CD4-positive, alpha-beta T cell (primary cell): ENCODE measurements at regions of chr2 and their contacts with region 1.

Region 1: GRCh38 chr2:203782262-203782976 is 76.0 kb downstream of the CD28 start:
- DNase-seq: peak; percentile 35 to 86 (median 52)
- ATAC-seq: peak; percentile 92
- H3K4me3 ChIP-seq: no peak overlapping the region
- H3K4me3 Mint-ChIP-seq: no peak overlapping the region
- H3K27ac ChIP-seq: no peak overlapping the region
- H3K27ac Mint-ChIP-seq: peak overlapping the region; percentile 62
- H3K4me1 ChIP-seq: peaks cover 20% of the 10 kb centered on the region
- H3K4me1 Mint-ChIP-seq: peaks cover 54% of the 10 kb centered on the region
- H3K27me3 ChIP-seq: no peaks in the 10 kb centered on the region
- H3K27me3 Mint-ChIP-seq: no peaks in the 10 kb centered on the region
- CTCF ChIP-seq: peak; percentile 79

Region 2: DNA sequence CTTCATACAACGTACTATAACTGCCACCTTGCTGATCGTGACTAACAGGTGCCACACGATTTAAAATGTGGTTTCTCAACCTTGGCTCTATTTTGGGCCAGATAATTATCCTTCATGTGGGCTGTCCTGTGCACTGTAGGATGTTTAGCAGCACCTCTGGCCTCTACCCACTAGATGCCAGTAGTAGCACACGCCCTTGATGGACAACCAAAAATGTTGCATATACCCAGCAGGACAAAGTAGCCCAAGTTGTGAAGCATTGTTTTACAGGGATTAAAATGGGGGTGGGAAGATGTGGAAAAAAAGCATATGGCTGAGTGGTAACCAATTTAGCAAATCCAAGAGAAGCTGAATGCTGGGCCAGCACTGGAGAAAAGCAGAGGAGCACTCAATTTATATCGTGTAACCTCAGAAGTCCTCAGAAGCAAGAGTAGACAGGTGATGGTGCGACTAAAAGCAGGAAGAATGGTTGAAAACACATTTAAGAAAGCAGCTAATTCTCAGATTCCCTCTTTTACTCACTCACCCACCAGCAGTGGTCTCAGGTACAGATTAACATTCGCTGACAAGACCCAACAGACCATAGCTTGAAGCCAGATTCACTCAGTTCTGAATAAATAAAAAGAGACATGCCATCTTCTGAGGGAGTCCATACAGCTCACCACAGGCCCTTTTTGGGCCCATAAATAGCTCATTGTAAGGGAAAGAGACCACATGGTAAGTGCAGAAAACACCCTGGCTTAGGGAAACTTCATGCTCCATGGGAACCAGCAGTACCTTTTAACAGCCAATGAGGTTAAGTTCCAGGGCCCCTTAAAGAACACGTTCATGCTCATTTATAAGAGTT is 297.9 kb before region 1 on chr2:
- CTCF ChIA-PET with region 1: interaction called, 5 read pairs
- POLR2A ChIA-PET with region 1: interaction called, 3 read pairs
- intact Hi-C with region 1: loop called (anchors 1 to 10 kb)
- DNase-seq: peak; percentile 34 to 83 (median 48)
- ATAC-seq: peak; percentile 98
- H3K4me3 ChIP-seq: no peak overlapping the region
- H3K4me3 Mint-ChIP-seq: no peak overlapping the region
- H3K27ac ChIP-seq: no peak overlapping the region
- H3K27ac Mint-ChIP-seq: no peak overlapping the region
- H3K4me1 ChIP-seq: peaks cover 3% of the 10 kb centered on the region
- H3K4me1 Mint-ChIP-seq: peaks cover 6% of the 10 kb centered on the region
- H3K27me3 ChIP-seq: no peaks in the 10 kb centered on the region
- H3K27me3 Mint-ChIP-seq: no peaks in the 10 kb centered on the region
- CTCF ChIP-seq: peak; percentile 77

Region 3: DNA sequence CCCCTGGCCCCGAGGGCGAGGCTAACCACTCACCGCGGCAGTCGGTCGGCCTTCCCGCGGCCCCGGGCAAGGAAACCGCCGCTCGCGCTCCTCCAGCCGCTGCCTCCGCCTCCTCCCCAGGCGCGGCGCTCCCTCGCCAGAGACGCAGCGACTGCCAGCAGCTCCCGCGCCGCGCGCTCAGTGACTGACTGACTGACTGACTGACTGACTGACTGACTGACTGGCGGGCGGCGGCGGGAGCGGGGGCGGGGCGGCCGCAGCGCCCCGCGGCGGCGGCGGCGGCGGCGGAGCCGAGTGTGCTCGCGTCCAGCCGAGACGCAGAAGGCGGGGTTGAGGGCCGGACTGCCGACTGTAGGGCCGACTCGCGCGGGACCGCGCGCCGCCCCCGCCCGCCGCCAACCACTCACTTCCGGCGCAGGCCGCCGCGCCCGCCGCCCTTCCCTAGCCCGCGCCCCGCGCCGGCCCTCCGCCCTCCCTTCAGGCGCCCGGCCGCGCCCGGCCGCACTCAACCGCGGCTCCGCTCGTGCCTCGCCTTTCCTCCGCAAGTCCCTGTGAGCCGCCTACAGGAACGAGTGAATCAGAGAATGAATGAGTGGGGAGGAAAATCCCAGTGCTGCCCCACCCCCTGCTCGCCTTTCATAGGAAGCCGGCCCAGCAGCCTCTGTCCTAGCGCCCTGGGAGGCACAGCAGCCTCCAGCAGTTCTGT is 247.2 kb before region 1 on chr2 and contains the start of gene RAPH1:
- CTCF ChIA-PET with region 1: no interaction called
- POLR2A ChIA-PET with region 1: no interaction called
- intact Hi-C with region 1: loop called in 1 of 2 experiments (anchors 10 kb)
- DNase-seq: peak; percentile 13 to 77 (median 49)
- ATAC-seq: peak; percentile 61
- H3K4me3 ChIP-seq: peak within 1 kb of the TSS; percentile 72
- H3K4me3 Mint-ChIP-seq: peak within 1 kb of the TSS; percentile 97
- H3K27ac ChIP-seq: no peak within 1 kb of the TSS
- H3K27ac Mint-ChIP-seq: peak within 1 kb of the TSS; percentile 80
- H3K4me1 ChIP-seq: peaks cover 20% of the 10 kb centered on the region
- H3K4me1 Mint-ChIP-seq: peaks cover 36% of the 10 kb centered on the region
- H3K27me3 ChIP-seq: peaks cover 0 to 4% of the 10 kb centered on the region in 2 experiments
- H3K27me3 Mint-ChIP-seq: peaks cover 5% of the 10 kb centered on the region
- CTCF ChIP-seq: no peak
- total RNA-seq, gene RAPH1: 4.3 to 5.8 TPM

Region 4: GRCh38 chr2:203650860-203651613 is 131.4 kb before region 1 on chr2:
- CTCF ChIA-PET with region 1: interaction called, 3 read pairs
- POLR2A ChIA-PET with region 1: no interaction called
- intact Hi-C with region 1: loop called in 1 of 2 experiments (anchors 5 kb)
- DNase-seq: peak in 3 of 14 experiments; percentile 36 to 45 (median 38)
- ATAC-seq: no peak
- H3K4me3 ChIP-seq: no peak overlapping the region
- H3K4me3 Mint-ChIP-seq: no peak overlapping the region
- H3K27ac ChIP-seq: no peak overlapping the region
- H3K27ac Mint-ChIP-seq: no peak overlapping the region
- H3K4me1 ChIP-seq: no peaks in the 10 kb centered on the region
- H3K4me1 Mint-ChIP-seq: peaks cover 29% of the 10 kb centered on the region
- H3K27me3 ChIP-seq: no peaks in the 10 kb centered on the region
- H3K27me3 Mint-ChIP-seq: no peaks in the 10 kb centered on the region
- CTCF ChIP-seq: no peak

Region 5: GRCh38 chr2:203706403-203706802 is 76.0 kb before region 1 on chr2 and contains the start of gene CD28:
- CTCF ChIA-PET with region 1: interaction called, 3 read pairs
- POLR2A ChIA-PET with region 1: interaction called, 4 read pairs
- intact Hi-C with region 1: loop called (anchors 1 kb)
- DNase-seq: peak; percentile 78 to 97 (median 86)
- ATAC-seq: peak; percentile 76
- H3K4me3 ChIP-seq: peak within 1 kb of the TSS; percentile 81
- H3K4me3 Mint-ChIP-seq: peak within 1 kb of the TSS; percentile 90
- H3K27ac ChIP-seq: peak within 1 kb of the TSS; percentile 82 to 92
- H3K27ac Mint-ChIP-seq: peak within 1 kb of the TSS; percentile 92
- H3K4me1 ChIP-seq: peaks cover 22% of the 10 kb centered on the region
- H3K4me1 Mint-ChIP-seq: peaks cover 54% of the 10 kb centered on the region
- H3K27me3 ChIP-seq: no peaks in the 10 kb centered on the region
- H3K27me3 Mint-ChIP-seq: no peaks in the 10 kb centered on the region
- CTCF ChIP-seq: no peak
- total RNA-seq, gene CD28: 128 to 130 TPM

Region 6: DNA sequence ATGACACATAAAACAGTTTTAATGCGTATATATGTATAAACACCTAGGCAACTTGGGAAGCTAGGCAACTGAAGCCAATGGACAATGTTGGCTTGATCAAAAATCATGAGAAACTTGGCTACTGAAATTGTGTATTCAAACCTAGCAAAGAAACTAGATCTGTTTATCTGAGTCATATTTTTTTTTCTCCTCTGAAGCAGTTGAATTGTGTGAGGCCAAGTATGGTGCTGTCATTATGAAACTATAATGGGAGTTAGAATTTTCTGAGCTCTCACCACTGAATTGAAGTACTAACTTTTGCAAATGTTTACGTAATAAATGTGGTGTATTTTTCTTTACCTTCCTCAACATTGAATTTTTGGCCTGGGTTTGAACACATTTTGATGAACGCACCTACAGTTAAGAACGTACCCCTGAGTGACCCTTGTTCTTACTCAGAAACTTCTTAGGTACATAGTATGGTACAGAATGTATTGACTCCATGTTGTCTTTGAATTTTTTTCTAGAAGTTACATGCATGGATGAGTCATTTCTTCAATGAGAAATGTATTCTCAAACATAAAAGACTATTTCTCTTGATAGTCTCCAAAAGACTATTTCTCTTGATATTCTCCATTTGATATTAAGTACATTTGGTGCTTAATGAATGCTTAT is 52.2 kb before region 1 on chr2:
- CTCF ChIA-PET with region 1: interaction called, 3 read pairs
- POLR2A ChIA-PET with region 1: no interaction called
- intact Hi-C with region 1: loop called in 1 of 2 experiments (anchors 5 kb)
- DNase-seq: no peak
- ATAC-seq: peak; percentile 62
- H3K4me3 ChIP-seq: no peak overlapping the region
- H3K4me3 Mint-ChIP-seq: peak overlapping the region; percentile 75
- H3K27ac ChIP-seq: peak overlapping the region; percentile 25 to 26
- H3K27ac Mint-ChIP-seq: peak overlapping the region; percentile 87
- H3K4me1 ChIP-seq: peaks cover 61% of the 10 kb centered on the region
- H3K4me1 Mint-ChIP-seq: peaks cover 95% of the 10 kb centered on the region
- H3K27me3 ChIP-seq: no peaks in the 10 kb centered on the region
- H3K27me3 Mint-ChIP-seq: no peaks in the 10 kb centered on the region
- CTCF ChIP-seq: no peak

Region 7: GRCh38 chr2:203751685-203752271 is 30.6 kb before region 1 on chr2:
- CTCF ChIA-PET with region 1: no interaction called
- POLR2A ChIA-PET with region 1: no interaction called
- intact Hi-C with region 1: loop called in 1 of 2 experiments (anchors 5 kb)
- DNase-seq: no peak
- ATAC-seq: no peak
- H3K4me3 ChIP-seq: no peak overlapping the region
- H3K4me3 Mint-ChIP-seq: no peak overlapping the region
- H3K27ac ChIP-seq: no peak overlapping the region
- H3K27ac Mint-ChIP-seq: peak overlapping the region; percentile 46
- H3K4me1 ChIP-seq: peaks cover 34% of the 10 kb centered on the region
- H3K4me1 Mint-ChIP-seq: peaks cover 71% of the 10 kb centered on the region
- H3K27me3 ChIP-seq: no peaks in the 10 kb centered on the region
- H3K27me3 Mint-ChIP-seq: no peaks in the 10 kb centered on the region
- CTCF ChIP-seq: no peak